Activated CD8-positive, alpha-beta T cell treated with anti-CD3 and anti-CD28 coated beads, Interleukin-2, amount 10 ng/mL, durations not matched to agents 7 days and 5 days (primary cell): ENCODE measurements at regions of chr16 and their contacts with region 1.

Region 1: DNA sequence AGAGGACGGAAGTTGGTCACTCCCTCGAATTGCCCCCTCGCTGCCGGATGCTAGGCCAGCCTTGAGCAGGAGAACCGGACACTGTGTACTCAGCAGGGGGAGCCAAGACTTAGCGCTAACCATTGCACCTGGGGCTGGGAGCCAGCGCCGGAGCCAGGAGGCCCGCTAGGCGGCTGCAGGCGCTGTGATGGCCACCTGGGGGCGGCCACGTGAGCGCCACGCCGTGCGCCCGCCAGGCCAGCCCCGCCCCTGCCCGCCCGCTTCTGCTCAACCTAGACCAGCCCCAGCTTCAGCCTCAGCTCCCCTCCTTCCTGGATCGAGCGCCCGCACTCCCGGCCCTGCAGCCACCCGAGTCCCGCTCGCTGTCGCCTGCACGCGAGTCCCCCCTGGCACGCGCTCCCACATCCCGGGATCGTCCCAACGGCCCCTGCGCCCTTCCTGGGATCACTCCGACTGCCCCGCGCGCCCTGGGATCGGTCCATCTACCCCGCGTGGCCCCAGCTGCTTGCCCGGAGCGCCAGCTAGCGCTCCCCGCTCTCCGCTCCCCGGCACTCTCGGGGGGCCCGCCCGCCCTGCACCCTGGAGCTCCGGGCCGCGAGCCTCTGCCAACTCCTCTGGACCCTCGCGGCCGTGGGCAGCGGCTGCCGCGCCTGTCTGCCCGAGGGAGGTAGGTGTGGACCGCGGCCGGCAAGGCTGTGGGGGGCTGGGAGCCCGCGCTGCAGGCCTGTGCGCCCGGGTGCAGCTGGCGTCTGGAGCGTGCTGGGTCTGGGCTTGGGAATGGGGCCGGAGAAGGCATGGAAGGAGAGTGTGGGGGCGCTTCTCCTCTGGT is at the start of gene EEF2K:
- DNase-seq: peak; percentile 90
- ATAC-seq: peak; percentile 94
- H3K4me3 Mint-ChIP-seq: peak within 1 kb of the TSS; percentile 80
- H3K27ac Mint-ChIP-seq: peak within 1 kb of the TSS; percentile 78
- H3K4me1 Mint-ChIP-seq: peaks cover 40% of the 10 kb centered on the region
- H3K27me3 Mint-ChIP-seq: no peaks in the 10 kb centered on the region
- total RNA-seq, gene EEF2K: 27.7 to 28.9 TPM

Region 2: GRCh38 chr16:22081050-22081449 is 125.2 kb before region 1 on chr16:
- CTCF ChIA-PET with region 1: no interaction called
- POLR2A ChIA-PET with region 1: no interaction called
- DNase-seq: no peak
- ATAC-seq: no peak
- H3K4me3 Mint-ChIP-seq: no peak overlapping the region
- H3K27ac Mint-ChIP-seq: no peak overlapping the region
- H3K4me1 Mint-ChIP-seq: no peaks in the 10 kb centered on the region
- H3K27me3 Mint-ChIP-seq: no peaks in the 10 kb centered on the region

Region 3: DNA sequence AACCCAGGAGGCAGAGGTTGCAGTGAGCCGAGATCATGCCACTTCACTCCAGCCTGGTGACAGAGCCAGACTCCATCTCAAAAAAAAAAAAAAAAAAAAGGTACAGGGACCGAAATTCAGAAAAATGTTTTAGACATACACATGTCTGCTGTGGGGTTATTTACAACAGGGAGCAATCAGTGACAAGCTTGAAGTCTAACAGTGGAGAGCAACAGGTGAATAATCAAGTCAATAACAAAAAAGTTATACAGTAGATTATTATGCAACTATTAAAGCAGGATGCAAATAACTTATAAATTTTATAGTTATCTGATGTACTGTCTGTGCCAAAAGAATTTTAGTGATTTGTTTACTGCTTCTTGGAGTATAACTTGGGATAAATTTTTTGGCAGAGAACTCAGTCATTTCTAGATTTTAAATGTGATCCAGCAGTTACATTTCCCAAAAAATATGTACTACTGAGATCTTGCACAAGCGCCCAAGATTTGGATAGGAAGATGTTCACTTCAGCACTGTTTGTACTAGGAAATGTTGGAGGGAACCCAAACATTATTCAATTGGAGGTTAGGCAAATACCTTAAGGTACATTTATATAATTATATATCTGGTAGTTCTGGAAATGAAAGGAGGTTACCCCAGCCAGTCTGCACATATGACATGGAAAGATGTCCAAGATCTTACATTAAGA is 33.9 kb after region 1 on chr16:
- CTCF ChIA-PET with region 1: interaction called, 23 read pairs
- POLR2A ChIA-PET with region 1: interaction called, 15 read pairs
- DNase-seq: no peak
- ATAC-seq: no peak
- H3K4me3 Mint-ChIP-seq: no peak overlapping the region
- H3K27ac Mint-ChIP-seq: peak overlapping the region; percentile 90
- H3K4me1 Mint-ChIP-seq: peaks cover 38% of the 10 kb centered on the region
- H3K27me3 Mint-ChIP-seq: no peaks in the 10 kb centered on the region

Region 4: DNA sequence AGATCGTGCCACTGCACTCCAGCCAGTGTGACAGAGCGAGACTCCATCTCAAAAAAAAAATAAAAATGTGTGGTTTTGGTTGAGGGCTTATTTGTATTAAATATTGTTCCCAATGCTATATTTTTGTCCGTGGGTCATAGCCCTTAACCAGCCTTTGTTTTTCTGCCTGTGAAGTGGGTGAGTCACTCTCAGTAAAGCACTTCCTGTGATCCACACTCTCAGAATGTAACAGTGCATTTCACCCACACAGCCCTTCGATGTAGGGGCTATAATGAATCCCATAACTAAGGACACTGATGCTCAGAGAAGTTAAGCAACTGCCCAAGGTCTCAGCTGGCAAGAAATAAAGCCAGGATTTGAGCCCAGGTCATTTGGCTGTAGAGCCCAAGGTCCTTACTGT is 56.2 kb after region 1 on chr16:
- CTCF ChIA-PET with region 1: interaction called, 10 read pairs
- POLR2A ChIA-PET with region 1: interaction called, 3 read pairs
- DNase-seq: no peak
- ATAC-seq: peak; percentile 54
- H3K4me3 Mint-ChIP-seq: no peak overlapping the region
- H3K27ac Mint-ChIP-seq: peak overlapping the region; percentile 60
- H3K4me1 Mint-ChIP-seq: peaks cover 53% of the 10 kb centered on the region
- H3K27me3 Mint-ChIP-seq: no peaks in the 10 kb centered on the region

Region 5: GRCh38 chr16:22297114-22297878 is 91.1 kb after region 1 on chr16 and contains the start of gene POLR3E:
- CTCF ChIA-PET with region 1: interaction called, 355 read pairs
- POLR2A ChIA-PET with region 1: interaction called, 7 read pairs
- DNase-seq: peak; percentile 100
- ATAC-seq: peak; percentile 87
- H3K4me3 Mint-ChIP-seq: peak within 1 kb of the TSS; percentile 92
- H3K27ac Mint-ChIP-seq: peak within 1 kb of the TSS; percentile 93
- H3K4me1 Mint-ChIP-seq: peaks cover 27% of the 10 kb centered on the region
- H3K27me3 Mint-ChIP-seq: peaks cover 2% of the 10 kb centered on the region
- total RNA-seq, gene POLR3E: 43.8 to 49.9 TPM